Activated CD8-positive, alpha-beta T cell treated with anti-CD3 and anti-CD28 coated beads, Interleukin-2, amount 10 ng/mL, durations not matched to agents 7 days and 5 days (primary cell): ENCODE measurements at regions of chr18 and their contacts with region 1.

Region 1: DNA sequence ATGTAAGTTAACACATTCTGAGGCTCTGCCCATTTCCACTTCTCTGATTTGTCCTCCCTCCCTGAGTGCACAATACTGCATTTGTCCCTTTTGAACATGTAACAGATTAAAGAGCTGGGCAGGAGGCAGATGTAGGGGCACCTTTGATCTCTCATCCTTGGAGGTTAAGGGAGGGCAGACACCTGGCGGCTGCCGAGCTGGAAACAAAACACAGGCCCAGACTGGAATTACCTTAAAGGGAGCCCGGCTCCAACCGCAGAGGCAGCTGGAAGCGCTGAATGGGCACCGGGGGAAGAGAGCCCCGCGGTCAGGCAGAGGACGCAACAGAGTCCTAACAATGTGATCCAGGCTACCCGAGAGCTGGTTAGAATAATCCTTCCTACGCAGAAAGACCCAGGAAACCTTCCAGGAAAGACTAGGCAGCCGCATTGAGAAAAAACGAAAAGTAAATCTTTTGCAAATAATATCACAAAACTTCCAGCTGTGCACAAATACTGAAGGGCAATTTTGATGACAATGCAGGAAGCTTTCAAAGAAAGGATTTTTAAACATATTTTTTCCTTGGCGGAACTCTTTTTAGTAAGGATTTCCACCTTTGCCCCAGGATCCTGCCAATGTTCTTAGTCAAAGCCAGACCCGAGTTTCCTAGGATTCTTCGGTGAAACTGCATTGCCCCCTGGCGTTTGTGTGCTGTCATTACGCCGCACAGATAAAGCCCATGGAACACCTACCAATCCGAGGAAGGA is 216.0 kb downstream of the TGIF1 start:
- DNase-seq: peak; percentile 79
- ATAC-seq: peak; percentile 83
- H3K4me3 Mint-ChIP-seq: peak overlapping the region; percentile 37
- H3K27ac Mint-ChIP-seq: no peak overlapping the region
- H3K4me1 Mint-ChIP-seq: peaks cover 27% of the 10 kb centered on the region
- H3K27me3 Mint-ChIP-seq: peaks cover 8% of the 10 kb centered on the region

Region 2: GRCh38 chr18:3261371-3262246 is 404.3 kb before region 1 on chr18 and contains the start of gene MYL12B:
- CTCF ChIA-PET with region 1: interaction called, 10 read pairs
- POLR2A ChIA-PET with region 1: interaction called, 4 read pairs
- DNase-seq: peak; percentile 87
- ATAC-seq: peak; percentile 74
- H3K4me3 Mint-ChIP-seq: peak within 1 kb of the TSS; percentile 90
- H3K27ac Mint-ChIP-seq: peak within 1 kb of the TSS; percentile 100
- H3K4me1 Mint-ChIP-seq: peaks cover 78% of the 10 kb centered on the region
- H3K27me3 Mint-ChIP-seq: no peaks in the 10 kb centered on the region
- total RNA-seq, gene MYL12B: 402 to 404 TPM

Region 3: GRCh38 chr18:3323900-3324299 is 342.1 kb before region 1 on chr18:
- CTCF ChIA-PET with region 1: interaction called, 16 read pairs
- POLR2A ChIA-PET with region 1: no interaction called
- DNase-seq: no peak
- ATAC-seq: no peak
- H3K4me3 Mint-ChIP-seq: no peak overlapping the region
- H3K27ac Mint-ChIP-seq: no peak overlapping the region
- H3K4me1 Mint-ChIP-seq: peaks cover 3% of the 10 kb centered on the region
- H3K27me3 Mint-ChIP-seq: peaks cover 2% of the 10 kb centered on the region

Region 4: GRCh38 chr18:3454365-3455089 is 211.4 kb before region 1 on chr18:
- CTCF ChIA-PET with region 1: interaction called, 126 read pairs
- POLR2A ChIA-PET with region 1: interaction called, 7 read pairs
- DNase-seq: peak; percentile 62
- ATAC-seq: no peak
- H3K4me3 Mint-ChIP-seq: peak overlapping the region; percentile 88
- H3K27ac Mint-ChIP-seq: peak overlapping the region; percentile 90
- H3K4me1 Mint-ChIP-seq: peaks cover 53% of the 10 kb centered on the region
- H3K27me3 Mint-ChIP-seq: no peaks in the 10 kb centered on the region

Region 5: GRCh38 chr18:3604498-3605408 is 61.2 kb before region 1 on chr18:
- CTCF ChIA-PET with region 1: interaction called, 33 read pairs
- POLR2A ChIA-PET with region 1: interaction called, 4 read pairs
- DNase-seq: peak; percentile 52
- ATAC-seq: peak; percentile 71
- H3K4me3 Mint-ChIP-seq: no peak overlapping the region
- H3K27ac Mint-ChIP-seq: no peak overlapping the region
- H3K4me1 Mint-ChIP-seq: peaks cover 27% of the 10 kb centered on the region
- H3K27me3 Mint-ChIP-seq: no peaks in the 10 kb centered on the region

Region 6: GRCh38 chr18:3645384-3646156 is 20.4 kb before region 1 on chr18:
- CTCF ChIA-PET with region 1: interaction called, 17 read pairs
- POLR2A ChIA-PET with region 1: no interaction called
- DNase-seq: no peak
- ATAC-seq: no peak
- H3K4me3 Mint-ChIP-seq: no peak overlapping the region
- H3K27ac Mint-ChIP-seq: no peak overlapping the region
- H3K4me1 Mint-ChIP-seq: peaks cover 17% of the 10 kb centered on the region
- H3K27me3 Mint-ChIP-seq: no peaks in the 10 kb centered on the region

Region 7: GRCh38 chr18:3799176-3799914 is 133.4 kb after region 1 on chr18:
- CTCF ChIA-PET with region 1: no interaction called
- POLR2A ChIA-PET with region 1: no interaction called
- DNase-seq: no peak
- ATAC-seq: no peak
- H3K4me3 Mint-ChIP-seq: no peak overlapping the region
- H3K27ac Mint-ChIP-seq: no peak overlapping the region
- H3K4me1 Mint-ChIP-seq: no peaks in the 10 kb centered on the region
- H3K27me3 Mint-ChIP-seq: no peaks in the 10 kb centered on the region